PC-9 (cell line): ENCODE measurements at regions of chr19 and their contacts with region 1.

Region 1: GRCh38 chr19:14496028-14496833 is at the start of gene GIPC1:
- DNase-seq: peak; percentile 95 to 98
- H3K4me3 ChIP-seq: peak within 1 kb of the TSS; percentile 99
- H3K27ac ChIP-seq: peak within 1 kb of the TSS; percentile 91
- H3K4me1 ChIP-seq: peaks cover 34% of the 10 kb centered on the region
- H3K27me3 ChIP-seq: no peaks in the 10 kb centered on the region
- CTCF ChIP-seq: no peak
- total RNA-seq, gene GIPC1: 205 and 259 TPM in 2 replicates

Region 2: DNA sequence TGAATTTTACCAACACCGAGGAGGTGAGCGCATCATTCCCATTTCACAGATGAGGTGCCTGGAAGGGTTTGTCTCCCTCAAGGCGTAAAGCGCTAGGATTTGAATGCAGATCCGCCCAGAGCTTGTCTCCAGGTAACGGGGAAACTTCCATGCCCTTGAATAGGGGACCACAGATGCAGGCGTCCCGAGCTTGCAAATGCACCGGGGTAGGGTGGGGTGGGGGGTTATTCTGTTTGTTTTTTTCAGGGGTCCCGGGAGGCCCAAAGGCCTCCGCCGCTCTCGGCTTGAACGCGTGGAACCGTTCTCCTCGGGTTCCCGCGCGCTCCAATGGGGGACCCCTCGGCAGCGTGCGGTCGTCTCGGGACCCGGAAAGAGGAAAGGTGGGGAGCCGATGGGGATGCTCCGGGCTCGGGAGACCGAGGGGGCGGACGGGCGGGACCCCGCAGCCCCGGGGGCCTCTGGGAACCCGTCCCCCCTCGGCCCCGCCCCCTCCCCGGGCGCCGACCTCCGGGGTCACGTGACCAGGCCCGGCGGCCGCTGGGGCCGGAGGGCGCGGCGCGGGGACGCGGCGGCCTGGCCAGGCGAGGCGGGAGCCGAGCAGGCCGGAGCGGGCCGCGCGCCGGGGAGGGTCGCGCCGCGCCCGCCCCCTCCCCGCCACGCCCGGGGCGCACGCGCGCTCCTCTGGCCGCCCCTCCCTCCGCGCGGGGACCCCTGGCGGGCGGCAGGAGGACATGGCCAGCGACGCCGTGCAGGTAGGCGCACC is 63.3 kb before region 1 on chr19 and contains the start of gene PKN1:
- CTCF ChIA-PET with region 1: no interaction called
- POLR2A ChIA-PET with region 1: interaction called, 3 read pairs
- intact Hi-C with region 1: loop called (anchors 10 kb)
- DNase-seq: peak; percentile 38 to 66
- H3K4me3 ChIP-seq: peak within 1 kb of the TSS; percentile 93
- H3K27ac ChIP-seq: peak within 1 kb of the TSS; percentile 51
- H3K4me1 ChIP-seq: peaks cover 24% of the 10 kb centered on the region
- H3K27me3 ChIP-seq: no peaks in the 10 kb centered on the region; the same call in 1 of the 2 replicates
- CTCF ChIP-seq: no peak
- total RNA-seq, gene PKN1: 257 and 417 TPM in 2 replicates

Region 3: DNA sequence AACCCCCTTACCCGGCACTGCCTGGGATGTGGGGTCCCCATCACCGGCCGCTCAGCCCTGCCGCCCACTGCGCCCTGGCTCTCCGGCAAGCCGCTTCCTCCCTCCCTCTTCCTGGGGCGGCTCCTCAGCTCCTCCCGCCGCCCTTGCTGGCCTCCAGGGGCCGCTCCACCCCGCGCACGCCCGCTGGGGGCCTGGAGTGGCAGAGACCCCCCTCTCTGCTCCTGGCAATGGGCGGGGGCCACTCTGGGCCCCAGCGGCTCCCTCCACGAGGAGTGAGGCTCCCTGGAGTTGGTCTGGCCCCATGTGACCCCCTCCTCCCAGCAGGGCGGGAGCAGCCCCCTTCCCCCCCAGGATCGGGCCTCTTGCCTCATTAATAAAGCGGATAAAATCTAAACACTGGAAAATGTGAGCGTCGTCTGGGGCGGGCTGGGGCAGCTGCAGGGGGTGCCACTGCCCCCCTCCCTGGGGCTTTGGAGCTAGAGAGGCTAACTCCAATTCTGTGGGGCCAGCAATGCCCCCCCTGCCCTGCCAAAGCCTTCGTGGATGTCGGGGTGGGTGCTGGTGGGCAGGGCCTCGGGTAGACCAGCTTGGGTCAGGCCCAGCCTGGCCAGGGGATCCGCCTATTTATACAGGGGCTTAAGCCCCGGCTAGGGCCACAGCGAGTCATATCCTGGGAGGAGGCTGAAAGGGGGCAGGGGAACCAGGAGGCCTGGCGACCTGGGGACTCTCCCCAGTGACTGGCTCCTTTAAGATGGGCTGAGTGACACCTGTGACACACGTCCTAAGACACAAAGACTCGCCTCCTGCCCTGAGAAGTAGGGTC is 20.8 kb before region 1 on chr19 and contains the start of gene PTGER1:
- CTCF ChIA-PET with region 1: no interaction called
- POLR2A ChIA-PET with region 1: no interaction called
- intact Hi-C with region 1: no loop called
- DNase-seq: peak; percentile 43 to 75
- H3K4me3 ChIP-seq: no peak within 1 kb of the TSS
- H3K27ac ChIP-seq: peak within 1 kb of the TSS; percentile 53
- H3K4me1 ChIP-seq: peaks cover 30% of the 10 kb centered on the region
- H3K27me3 ChIP-seq: no peaks in the 10 kb centered on the region
- CTCF ChIP-seq: 0 out of 2 replicates have a peak, but pooled peaks have one; percentile 13
- total RNA-seq, gene PTGER1: 1.4 TPM in 2 replicates

Region 4: GRCh38 chr19:14556662-14557188 is 60.5 kb after region 1 on chr19:
- CTCF ChIA-PET with region 1: no interaction called
- POLR2A ChIA-PET with region 1: interaction called, 5 read pairs
- intact Hi-C with region 1: loop called (anchors 1 kb)
- DNase-seq: peak; percentile 59 to 77
- H3K4me3 ChIP-seq: no peak overlapping the region
- H3K27ac ChIP-seq: 0 out of 2 replicates have a peak overlapping the region, but pooled peaks have one; percentile 1
- H3K4me1 ChIP-seq: 0 out of 2 replicates have a peak, but pooled peaks cover 6% of the 10 kb centered on the region
- H3K27me3 ChIP-seq: no peaks in the 10 kb centered on the region
- CTCF ChIP-seq: peak; percentile 97

Region 5: DNA sequence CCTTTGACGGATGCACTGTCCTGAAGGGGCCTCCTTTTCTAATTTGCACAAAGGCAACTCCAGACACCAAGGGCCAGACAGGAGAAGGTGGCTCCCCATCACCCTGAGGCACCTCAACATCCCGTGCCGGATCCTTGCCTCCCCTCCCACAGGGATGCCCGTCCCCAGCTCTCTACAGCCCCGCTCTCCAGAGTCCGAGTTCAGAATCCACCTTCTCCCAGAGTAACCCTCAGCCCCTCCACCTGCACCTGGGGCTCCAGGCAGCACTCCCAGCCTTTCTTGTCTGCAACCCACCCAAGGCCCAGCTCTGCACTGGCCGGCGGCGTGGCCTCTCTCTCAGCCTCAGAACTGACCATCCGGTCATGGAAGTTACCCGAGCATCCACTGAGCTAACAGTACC is 70.8 kb after region 1 on chr19:
- CTCF ChIA-PET with region 1: no interaction called
- POLR2A ChIA-PET with region 1: no interaction called
- intact Hi-C with region 1: no loop called
- DNase-seq: peak in 1 of 2 experiments; percentile 17
- H3K4me3 ChIP-seq: no peak overlapping the region
- H3K27ac ChIP-seq: no peak overlapping the region
- H3K4me1 ChIP-seq: peaks cover 9% of the 10 kb centered on the region
- H3K27me3 ChIP-seq: no peaks in the 10 kb centered on the region
- CTCF ChIP-seq: no peak

Region 6: GRCh38 chr19:15432629-15433518 is 936.6 kb after region 1 on chr19:
- CTCF ChIA-PET with region 1: interaction called, 14 read pairs
- POLR2A ChIA-PET with region 1: no interaction called
- intact Hi-C with region 1: no loop called
- DNase-seq: peak; percentile 74 to 91
- H3K4me3 ChIP-seq: peak overlapping the region; percentile 95
- H3K27ac ChIP-seq: 0 out of 2 replicates have a peak overlapping the region, but pooled peaks have one; percentile 13
- H3K4me1 ChIP-seq: peaks cover 12% of the 10 kb centered on the region
- H3K27me3 ChIP-seq: no peaks in the 10 kb centered on the region
- CTCF ChIP-seq: no peak